HepG2 (cell line): ENCODE measurements at regions of chr7 and their contacts with region 1.

Region 1: DNA sequence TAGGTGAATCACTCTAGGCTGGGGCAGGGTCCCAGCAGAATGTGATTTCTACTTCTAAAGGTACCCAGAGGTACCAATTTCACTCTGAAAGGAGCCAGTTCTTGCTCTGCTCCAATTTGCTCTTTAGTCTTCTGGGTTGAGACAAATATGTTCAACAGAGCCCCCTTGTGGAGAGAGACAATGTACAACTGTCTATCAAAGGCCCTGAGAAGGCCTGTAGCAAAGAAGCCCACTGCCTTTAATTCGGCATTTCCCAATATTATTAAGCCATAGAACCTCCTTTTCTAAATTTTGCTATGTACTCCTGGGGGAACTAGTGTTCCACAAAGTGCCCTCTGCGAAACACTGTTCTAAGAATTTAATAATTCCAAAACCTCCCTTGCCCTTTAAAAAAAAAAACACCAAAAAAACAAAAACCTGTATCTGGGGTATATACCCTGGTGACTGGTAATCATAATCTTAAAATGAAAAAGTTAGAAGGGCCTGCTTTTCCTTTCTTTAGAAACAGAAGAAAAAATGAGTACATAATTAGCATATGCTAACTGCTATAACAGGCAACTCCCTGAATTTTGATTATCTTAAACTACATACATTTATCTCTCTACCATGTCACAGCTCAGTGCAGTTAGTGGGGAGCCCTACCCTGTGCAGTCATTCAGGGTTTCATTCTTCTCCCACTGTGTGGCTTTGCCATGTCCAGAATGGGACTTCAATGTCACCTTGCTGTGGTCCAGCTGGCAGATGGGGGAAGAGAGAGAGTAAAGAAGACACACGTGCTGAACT is 160.9 kb upstream of the BMPER start:
- DNase-seq: peak; percentile 58
- ATAC-seq: peak; percentile 75
- H3K4me3 ChIP-seq: no peak overlapping the region
- H3K27ac ChIP-seq: no peak overlapping the region
- H3K4me1 ChIP-seq: peaks cover 10% of the 10 kb centered on the region
- H3K27me3 ChIP-seq: no peaks in the 10 kb centered on the region
- CTCF ChIP-seq: peak; percentile 58
- EP300 ChIP-seq: no peak
- POLR2A ChIP-seq: no peak
- RAD21 ChIP-seq: peak; percentile 22; the same call in 1 of the 2 replicates

Region 2: GRCh38 chr7:33334349-33334748 is 410.1 kb before region 1 on chr7:
- CTCF ChIA-PET with region 1: no interaction called
- POLR2A ChIA-PET with region 1: no interaction called
- in situ Hi-C with region 1: no loop called
- intact Hi-C with region 1: loop called (anchors 10 kb)
- DNase-seq: peak; percentile 6
- ATAC-seq: peak; percentile 63
- H3K4me3 ChIP-seq: no peak overlapping the region
- H3K27ac ChIP-seq: no peak overlapping the region
- H3K4me1 ChIP-seq: no peaks in the 10 kb centered on the region
- H3K27me3 ChIP-seq: no peaks in the 10 kb centered on the region
- CTCF ChIP-seq: peak; percentile 71
- EP300 ChIP-seq: no peak
- POLR2A ChIP-seq: no peak
- RAD21 ChIP-seq: no peak

Region 3: GRCh38 chr7:33459340-33459751 is 285.1 kb before region 1 on chr7:
- CTCF ChIA-PET with region 1: interaction called, 3 read pairs
- POLR2A ChIA-PET with region 1: no interaction called
- in situ Hi-C with region 1: no loop called
- intact Hi-C with region 1: loop called (anchors 1 kb)
- DNase-seq: peak; percentile 41
- ATAC-seq: peak; percentile 99
- H3K4me3 ChIP-seq: no peak overlapping the region
- H3K27ac ChIP-seq: no peak overlapping the region
- H3K4me1 ChIP-seq: peaks cover 10% of the 10 kb centered on the region; the same call in 1 of the 2 replicates
- H3K27me3 ChIP-seq: no peaks in the 10 kb centered on the region
- CTCF ChIP-seq: peak; percentile 52
- EP300 ChIP-seq: no peak
- POLR2A ChIP-seq: no peak
- RAD21 ChIP-seq: no peak

Region 4: GRCh38 chr7:33716581-33717477 is 27.7 kb before region 1 on chr7:
- CTCF ChIA-PET with region 1: no interaction called
- POLR2A ChIA-PET with region 1: no interaction called
- in situ Hi-C with region 1: no loop called
- intact Hi-C with region 1: loop called (anchors 2 kb)
- DNase-seq: peak; percentile 33
- ATAC-seq: peak; percentile 41; the same call in 1 of the 3 replicates
- H3K4me3 ChIP-seq: no peak overlapping the region
- H3K27ac ChIP-seq: no peak overlapping the region
- H3K4me1 ChIP-seq: peaks cover 29% of the 10 kb centered on the region
- H3K27me3 ChIP-seq: no peaks in the 10 kb centered on the region
- CTCF ChIP-seq: peak; percentile 63
- EP300 ChIP-seq: no peak
- POLR2A ChIP-seq: no peak
- RAD21 ChIP-seq: no peak